Breast epithelium (tissue), 4 donors: ENCODE measurements at regions of chrX and their contacts with region 1.

Region 1: GRCh38 chrX:152313529-152314302 is 137.4 kb downstream of the GABRA3 start:
- DNase-seq: no peak
- H3K4me3 ChIP-seq: no peak overlapping the region
- H3K27ac ChIP-seq: no peak overlapping the region
- H3K4me1 ChIP-seq: no peaks in the 10 kb centered on the region
- H3K27me3 ChIP-seq: no peaks in the 10 kb centered on the region
- CTCF ChIP-seq: no peak
- POLR2A ChIP-seq: no peak

Region 2: DNA sequence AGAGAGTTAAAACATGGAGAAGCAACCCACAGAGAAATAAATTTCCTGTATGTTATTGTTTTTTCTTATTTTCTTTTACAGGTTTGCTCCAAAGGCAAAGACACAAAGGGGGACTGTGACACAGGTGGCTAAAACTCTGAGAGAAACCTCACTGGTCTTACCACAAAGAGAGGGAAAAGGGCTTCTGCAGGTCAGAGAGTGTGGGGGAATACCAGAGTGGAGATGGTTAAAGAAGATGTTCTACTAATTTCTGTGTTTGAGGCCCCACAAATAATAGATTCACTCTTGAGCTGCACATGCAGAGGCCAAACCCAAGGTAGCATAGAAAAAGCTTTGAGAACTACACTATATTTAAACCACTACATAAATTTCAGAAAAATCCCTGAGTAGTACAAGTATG is 13.9 kb before region 1 on chrX:
- intact Hi-C with region 1: loop called (anchors 1 kb)
- DNase-seq: no peak
- H3K4me3 ChIP-seq: no peak overlapping the region
- H3K27ac ChIP-seq: no peak overlapping the region
- H3K4me1 ChIP-seq: no peaks in the 10 kb centered on the region
- H3K27me3 ChIP-seq: no peaks in the 10 kb centered on the region
- CTCF ChIP-seq: no peak
- POLR2A ChIP-seq: no peak

Region 3: DNA sequence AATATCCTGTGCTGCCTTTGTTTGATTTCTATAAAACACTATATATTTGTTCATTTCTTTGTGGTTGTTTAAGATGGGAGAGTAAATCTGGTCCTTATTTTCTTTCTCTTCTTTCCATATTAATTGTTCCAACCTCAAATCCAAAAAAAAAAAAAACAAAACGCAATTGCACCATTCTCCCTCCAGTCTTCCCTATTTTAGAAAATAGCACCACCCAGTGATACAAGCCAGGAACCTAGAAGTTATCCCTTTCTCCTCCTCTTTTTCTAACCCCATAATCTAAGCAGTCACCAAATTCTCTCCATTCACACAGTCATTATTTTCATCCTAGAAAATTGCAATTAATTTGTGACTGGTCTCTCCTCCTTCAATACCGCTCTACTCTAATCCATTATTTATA is 29.6 kb after region 1 on chrX:
- intact Hi-C with region 1: no loop called
- DNase-seq: no peak
- H3K4me3 ChIP-seq: no peak overlapping the region
- H3K27ac ChIP-seq: no peak overlapping the region
- H3K4me1 ChIP-seq: no peaks in the 10 kb centered on the region
- H3K27me3 ChIP-seq: peaks cover 0 to 15% of the 10 kb centered on the region in 2 donors
- CTCF ChIP-seq: no peak
- POLR2A ChIP-seq: no peak